ENCODE measurements at regions of chr7 and their contacts with region 1.

Region 1: GRCh38 chr7:74587435-74588126 is 69.9 kb upstream of the GTF2I start:
- DNase-seq: peak; percentile 50 to 71
- ATAC-seq: peak; percentile 63
- H3K4me3 ChIP-seq: no peak overlapping the region
- H3K27ac ChIP-seq: peak overlapping the region in 3 of 4 donors; percentile 28 to 61 (median 54)
- H3K4me1 ChIP-seq: peaks cover 0 to 10% of the 10 kb centered on the region in 2 donors
- H3K27me3 ChIP-seq: no peaks in the 10 kb centered on the region
- CTCF ChIP-seq: no peak
- POLR2A ChIP-seq: no peak

Region 2: DNA sequence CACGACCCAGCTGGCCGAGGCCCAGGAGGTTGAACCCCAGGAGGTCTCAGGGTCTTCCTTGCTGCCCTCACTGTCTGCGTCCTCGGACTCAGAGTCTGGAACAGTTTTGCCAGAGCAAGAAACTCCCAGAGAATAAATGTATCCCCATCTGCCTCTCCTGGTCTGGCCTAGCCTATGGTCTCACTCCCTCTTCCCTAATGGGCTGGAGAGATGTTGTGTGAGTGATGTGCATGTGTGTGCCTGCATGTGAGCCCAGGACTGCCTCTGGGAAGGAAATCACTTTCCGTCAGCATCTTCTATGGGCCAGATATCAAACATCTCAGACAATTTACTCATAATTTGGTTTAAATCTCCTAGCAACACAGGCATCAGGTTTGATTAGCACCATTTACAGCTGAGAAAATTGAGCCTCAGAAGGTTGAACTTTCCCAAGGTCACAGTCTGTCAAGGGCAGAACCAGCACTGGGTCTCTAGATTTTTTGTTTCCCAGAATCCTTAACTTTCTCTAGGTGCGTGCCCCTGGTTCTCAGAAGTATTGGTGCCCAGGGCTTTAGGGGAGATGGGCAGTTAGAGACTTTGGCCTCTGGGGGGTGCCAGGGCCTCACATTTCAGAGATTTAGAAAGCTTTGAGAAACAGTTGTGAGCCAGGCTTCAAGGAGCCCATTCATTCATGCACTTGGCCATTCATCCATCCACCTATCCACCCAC is 721.7 kb before region 1 on chr7:
- in situ Hi-C with region 1: no loop called
- intact Hi-C with region 1: no loop called
- DNase-seq: no peak
- ATAC-seq: peak; percentile 58 to 64
- H3K4me3 ChIP-seq: no peak overlapping the region
- H3K27ac ChIP-seq: no peak overlapping the region
- H3K4me1 ChIP-seq: peaks cover 0 to 3% of the 10 kb centered on the region in 2 donors
- H3K27me3 ChIP-seq: no peaks in the 10 kb centered on the region
- CTCF ChIP-seq: peak; percentile 28 to 58 (median 56)
- POLR2A ChIP-seq: no peak

Region 3: GRCh38 chr7:74684921-74685320 is 97.3 kb after region 1 on chr7:
- in situ Hi-C with region 1: loop called in 1 of 4 experiments (anchors 25 kb)
- intact Hi-C with region 1: no loop called
- DNase-seq: no peak
- ATAC-seq: no peak
- H3K4me3 ChIP-seq: no peak overlapping the region
- H3K27ac ChIP-seq: no peak overlapping the region
- H3K4me1 ChIP-seq: peaks cover 0 to 17% of the 10 kb centered on the region in 2 donors
- H3K27me3 ChIP-seq: no peaks in the 10 kb centered on the region
- CTCF ChIP-seq: no peak
- POLR2A ChIP-seq: no peak